Heart right ventricle (tissue), 16 donors: ENCODE measurements at regions of chr2 and their contacts with region 1.

Region 1: GRCh38 chr2:16420421-16420820 is 245.2 kb downstream of the CYRIA start:
- DNase-seq: no peak
- ATAC-seq: no peak
- H3K4me3 ChIP-seq: no peak overlapping the region
- H3K27ac ChIP-seq: no peak overlapping the region
- H3K4me1 ChIP-seq: peaks cover 0 to 5% (median 0%) of the 10 kb centered on the region in 9 donors
- H3K27me3 ChIP-seq: no peaks in the 10 kb centered on the region
- CTCF ChIP-seq: no peak

Region 2: GRCh38 chr2:16385341-16385740 is 35.1 kb before region 1 on chr2:
- intact Hi-C with region 1: loop called in 1 of 10 experiments (anchors 1 kb)
- DNase-seq: no peak
- ATAC-seq: peak in 1 of 8 donors; percentile 17
- H3K4me3 ChIP-seq: no peak overlapping the region
- H3K27ac ChIP-seq: no peak overlapping the region
- H3K4me1 ChIP-seq: peaks cover 0 to 8% (median 0%) of the 10 kb centered on the region in 9 donors
- H3K27me3 ChIP-seq: peaks cover 0 to 5% (median 0%) of the 10 kb centered on the region in 7 donors
- CTCF ChIP-seq: no peak

Region 3: DNA sequence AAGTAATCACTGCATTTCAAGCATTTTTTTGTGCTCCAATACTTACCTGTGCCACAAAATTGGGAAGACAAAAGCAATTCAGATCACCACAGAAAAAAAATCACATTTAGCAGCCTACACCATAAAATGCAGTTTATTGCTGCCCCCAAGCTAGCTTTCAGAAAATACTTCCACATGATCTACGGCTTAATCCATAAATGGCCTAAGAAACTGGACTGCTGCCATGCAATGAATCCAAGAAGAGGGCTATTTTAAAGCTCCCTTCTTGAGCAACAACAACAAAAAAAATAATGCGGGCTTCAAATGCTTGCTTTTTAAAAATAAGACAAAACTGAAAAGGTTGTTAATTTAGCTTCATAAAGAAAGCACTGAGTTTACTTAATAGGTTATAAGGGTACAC is 825.5 kb after region 1 on chr2:
- intact Hi-C with region 1: no loop called
- DNase-seq: no peak
- ATAC-seq: no peak
- H3K4me3 ChIP-seq: no peak overlapping the region
- H3K27ac ChIP-seq: no peak overlapping the region
- H3K4me1 ChIP-seq: no peaks in the 10 kb centered on the region
- H3K27me3 ChIP-seq: no peaks in the 10 kb centered on the region
- CTCF ChIP-seq: no peak